WTC11 (cell line): ENCODE measurements at regions of chr12 and their contacts with region 1.

Region 1: GRCh38 chr12:96985480-96986362 is 78.7 kb downstream of the NEDD1 start:
- DNase-seq: peak; percentile 63
- ATAC-seq: peak; percentile 84
- H3K4me3 Mint-ChIP-seq: peak overlapping the region; percentile 80
- H3K27ac Mint-ChIP-seq: no peak overlapping the region
- H3K4me1 Mint-ChIP-seq: peaks cover 51% of the 10 kb centered on the region
- H3K27me3 Mint-ChIP-seq: peaks cover 9% of the 10 kb centered on the region
- CTCF ChIP-seq: peak; percentile 93

Region 2: GRCh38 chr12:96578526-96579125 is 407.1 kb before region 1 on chr12:
- CTCF ChIA-PET with region 1: interaction called, 11 read pairs
- POLR2A ChIA-PET with region 1: no interaction called
- DNase-seq: no peak
- ATAC-seq: peak; percentile 71
- H3K4me3 Mint-ChIP-seq: no peak overlapping the region
- H3K27ac Mint-ChIP-seq: no peak overlapping the region
- H3K4me1 Mint-ChIP-seq: peaks cover 16% of the 10 kb centered on the region
- H3K27me3 Mint-ChIP-seq: no peaks in the 10 kb centered on the region
- CTCF ChIP-seq: peak; percentile 50

Region 3: GRCh38 chr12:97257726-97258125 is 272.0 kb after region 1 on chr12:
- CTCF ChIA-PET with region 1: no interaction called
- POLR2A ChIA-PET with region 1: no interaction called
- DNase-seq: no peak
- ATAC-seq: no peak
- H3K4me3 Mint-ChIP-seq: no peak overlapping the region
- H3K27ac Mint-ChIP-seq: no peak overlapping the region
- H3K4me1 Mint-ChIP-seq: peaks cover 21% of the 10 kb centered on the region
- H3K27me3 Mint-ChIP-seq: no peaks in the 10 kb centered on the region
- CTCF ChIP-seq: no peak

Region 4: GRCh38 chr12:97397008-97397407 is 411.3 kb after region 1 on chr12:
- CTCF ChIA-PET with region 1: interaction called, 12 read pairs
- POLR2A ChIA-PET with region 1: no interaction called
- DNase-seq: peak; percentile 46
- ATAC-seq: peak; percentile 98
- H3K4me3 Mint-ChIP-seq: no peak overlapping the region
- H3K27ac Mint-ChIP-seq: peak overlapping the region; percentile 99
- H3K4me1 Mint-ChIP-seq: peaks cover 37% of the 10 kb centered on the region
- H3K27me3 Mint-ChIP-seq: no peaks in the 10 kb centered on the region
- CTCF ChIP-seq: no peak

Region 5: DNA sequence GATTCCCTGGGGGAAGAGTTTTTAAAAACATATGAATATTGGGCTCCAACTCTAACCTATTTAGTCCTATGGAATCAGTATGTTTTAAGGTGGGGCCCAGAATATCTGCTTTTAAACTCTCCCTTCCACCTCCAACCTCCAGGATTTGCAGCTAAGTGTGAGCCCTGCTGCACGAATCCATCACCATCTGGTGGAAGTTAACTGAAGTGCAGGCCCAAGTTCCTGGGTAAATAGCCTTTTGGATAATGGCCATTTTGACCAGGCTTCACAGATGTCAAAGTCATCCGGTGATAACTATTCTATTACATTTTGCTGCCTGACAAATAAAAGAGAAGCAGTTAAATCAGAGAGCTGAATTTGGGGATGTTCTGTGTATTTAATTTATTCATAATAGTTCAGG is 418.8 kb after region 1 on chr12:
- CTCF ChIA-PET with region 1: interaction called, 25 read pairs
- POLR2A ChIA-PET with region 1: no interaction called
- DNase-seq: peak; percentile 65
- ATAC-seq: peak; percentile 97
- H3K4me3 Mint-ChIP-seq: no peak overlapping the region
- H3K27ac Mint-ChIP-seq: no peak overlapping the region
- H3K4me1 Mint-ChIP-seq: peaks cover 12% of the 10 kb centered on the region
- H3K27me3 Mint-ChIP-seq: no peaks in the 10 kb centered on the region
- CTCF ChIP-seq: peak; percentile 72